GM12878 (cell line): ENCODE measurements at regions of chr7 and their contacts with region 1.

Region 1: DNA sequence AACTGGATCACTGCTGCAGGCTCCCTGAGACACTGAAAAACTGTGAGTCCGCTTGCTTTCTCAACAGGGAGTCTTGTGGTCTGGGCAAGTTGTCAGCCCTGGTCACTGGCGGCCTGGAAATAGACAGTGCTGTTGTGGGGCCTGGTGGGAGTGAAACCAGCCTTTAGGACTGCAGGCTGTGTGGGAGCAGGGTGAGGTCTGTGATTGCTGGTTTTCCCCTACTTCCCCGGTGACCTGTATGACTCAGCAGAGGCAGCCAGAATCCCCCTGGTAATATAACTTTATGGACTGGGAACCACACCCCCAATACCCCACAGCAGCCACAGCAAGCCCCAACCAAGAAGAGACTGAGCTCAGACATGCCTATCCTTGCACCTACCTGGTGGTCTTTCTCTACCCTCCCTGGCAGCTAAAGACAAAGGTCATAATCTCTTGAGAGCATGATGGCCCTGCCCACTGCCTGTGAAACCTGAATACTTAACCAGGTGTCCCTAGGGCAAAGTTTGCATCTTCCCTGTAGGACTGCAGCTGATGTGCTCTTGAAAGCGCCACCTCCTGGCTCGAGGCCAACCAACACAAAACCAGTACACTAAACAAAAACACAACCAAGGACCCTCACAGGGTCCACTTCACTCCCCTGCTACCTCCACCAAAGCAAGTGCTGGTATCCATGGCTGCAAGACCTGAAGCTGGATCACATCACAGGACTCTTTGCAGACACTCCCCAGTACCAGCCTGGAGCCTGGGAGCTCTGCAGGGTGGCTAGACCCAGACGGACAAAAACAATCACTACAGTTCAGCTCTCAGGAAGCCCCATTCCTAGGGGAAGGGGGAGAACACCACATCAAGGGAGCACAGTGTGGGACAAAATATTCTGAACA is 7.2 kb upstream of the ADAM22 start:
- DNase-seq: peak; percentile 95
- ATAC-seq: peak; percentile 90
- H3K4me3 ChIP-seq: peak overlapping the region; percentile 62
- H3K27ac ChIP-seq: peak overlapping the region; percentile 92
- H3K4me1 ChIP-seq: peaks cover 9% of the 10 kb centered on the region
- H3K27me3 ChIP-seq: no peaks in the 10 kb centered on the region
- CTCF ChIP-seq: peak; percentile 36 to 48 (median 40)
- EP300 ChIP-seq: peak in 1 of 2 experiments; percentile 91; a peak in 3 of 4 replicates
- POLR2A ChIP-seq: peak; percentile 69
- RAD21 ChIP-seq: peak; percentile 10; the same call in 1 of the 2 replicates

Region 2: DNA sequence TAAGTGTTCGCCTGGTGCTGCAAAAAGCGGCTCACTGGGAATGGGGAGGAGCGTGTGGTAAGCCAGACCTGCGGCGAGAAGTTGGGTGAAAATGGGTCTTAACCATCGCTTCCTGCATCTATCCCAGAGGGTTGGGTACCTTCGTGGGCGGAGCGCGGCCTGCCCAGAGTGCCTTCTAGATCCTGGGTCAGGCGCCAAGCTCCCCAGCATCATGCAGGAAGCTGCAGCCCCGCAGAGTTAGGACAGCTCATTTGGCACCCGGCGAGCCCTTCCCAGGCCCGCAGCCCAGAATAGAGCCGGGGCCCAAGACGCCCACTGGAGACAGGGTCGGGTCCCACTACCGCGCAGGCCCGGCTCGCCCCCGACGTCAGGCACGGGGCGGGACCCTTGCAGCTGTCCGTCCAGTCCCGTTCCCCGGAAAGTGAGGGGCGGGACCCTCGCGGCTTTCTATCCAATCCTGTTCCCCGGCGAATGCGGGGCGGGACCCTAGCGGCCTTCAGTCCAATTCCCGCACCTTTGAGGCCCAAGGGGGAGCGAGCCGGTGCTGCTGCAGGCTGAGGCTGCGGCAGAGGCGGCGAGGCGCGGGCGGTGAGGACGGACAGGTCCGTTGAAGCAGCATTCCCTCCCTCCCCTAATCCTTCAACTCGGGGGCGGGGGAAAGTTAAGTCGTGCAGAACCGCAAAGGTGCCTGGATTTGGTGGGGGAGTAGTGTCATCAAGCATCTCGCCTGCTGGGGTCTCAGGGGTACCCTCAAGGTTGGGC is 581.5 kb before region 1 on chr7 and contains the start of gene CROT:
- CTCF ChIA-PET with region 1: no interaction called
- POLR2A ChIA-PET with region 1: no interaction called
- RAD21 ChIA-PET with region 1: no interaction called
- SMC1A ChIA-PET with region 1: no interaction called
- in situ Hi-C with region 1: no loop called
- intact Hi-C with region 1: loop called (anchors 10 kb)
- DNase-seq: peak; percentile 67
- ATAC-seq: peak; percentile 97
- H3K4me3 ChIP-seq: peak within 1 kb of the TSS; percentile 80
- H3K27ac ChIP-seq: peak within 1 kb of the TSS; percentile 76
- H3K4me1 ChIP-seq: no peaks in the 10 kb centered on the region
- H3K27me3 ChIP-seq: no peaks in the 10 kb centered on the region
- CTCF ChIP-seq: no peak
- EP300 ChIP-seq: no peak
- POLR2A ChIP-seq: peak; percentile 91
- RAD21 ChIP-seq: no peak
- polyA plus RNA-seq, gene CROT: 5.5 to 6.0 TPM

Region 3: DNA sequence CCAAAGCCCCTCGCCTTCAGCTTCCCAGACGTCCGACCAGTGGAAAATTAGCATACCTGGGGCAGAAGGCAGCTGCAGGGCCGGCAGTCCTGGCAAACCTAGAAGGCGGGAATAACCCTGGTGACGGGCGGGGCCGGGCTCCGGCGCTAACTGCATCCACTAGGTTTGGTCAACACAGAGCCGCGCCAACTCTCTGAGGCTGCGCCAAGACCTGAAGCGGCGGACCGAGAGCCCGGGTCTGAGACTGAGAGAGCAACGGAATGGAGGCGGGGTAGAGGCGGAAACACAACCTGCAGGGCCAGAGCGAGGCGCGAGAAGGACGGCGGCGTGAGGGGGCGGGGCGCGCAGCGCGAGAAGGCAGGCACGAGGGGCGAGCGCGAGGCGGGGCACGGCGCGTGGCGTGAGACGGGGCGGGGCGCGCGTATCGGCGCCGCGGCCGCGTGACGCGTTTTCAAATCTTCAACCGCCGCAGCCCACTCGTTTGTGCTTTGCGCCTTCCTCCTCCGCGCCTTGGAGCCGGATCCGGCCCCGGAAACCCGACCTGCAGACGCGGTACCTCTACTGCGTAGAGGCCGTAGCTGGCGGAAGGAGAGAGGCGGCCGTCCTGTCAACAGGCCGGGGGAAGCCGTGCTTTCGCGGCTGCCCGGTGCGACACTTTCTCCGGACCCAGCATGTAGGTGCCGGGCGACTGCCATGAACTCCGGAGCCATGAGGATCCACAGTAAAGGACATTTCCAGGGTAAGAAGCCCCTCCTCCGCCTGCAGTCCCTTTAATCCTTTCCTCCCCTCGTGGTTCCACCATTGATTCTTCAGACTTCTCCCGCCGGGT is 50.6 kb before region 1 on chr7 and contains the starts of genes DBF4 and SLC25A40:
- CTCF ChIA-PET with region 1: interaction called, 13 read pairs
- POLR2A ChIA-PET with region 1: interaction called, 16 read pairs
- RAD21 ChIA-PET with region 1: interaction called, 16 read pairs
- SMC1A ChIA-PET with region 1: interaction called, 19 read pairs
- in situ Hi-C with region 1: no loop called
- intact Hi-C with region 1: loop called (anchors 1 kb)
- DNase-seq: peak; percentile 86
- ATAC-seq: peak; percentile 86
- H3K4me3 ChIP-seq: peak within 1 kb of the TSS; percentile 88
- H3K27ac ChIP-seq: peak within 1 kb of the TSS; percentile 92
- H3K4me1 ChIP-seq: no peaks in the 10 kb centered on the region
- H3K27me3 ChIP-seq: no peaks in the 10 kb centered on the region
- CTCF ChIP-seq: no peak
- EP300 ChIP-seq: peak in 1 of 2 experiments; percentile 34; a peak in 1 of 4 replicates
- POLR2A ChIP-seq: peak; percentile 91
- RAD21 ChIP-seq: no peak
- polyA plus RNA-seq, gene DBF4: 46.1 to 47.0 TPM
- polyA plus RNA-seq, gene SLC25A40: 15.8 to 17.4 TPM

Region 4: DNA sequence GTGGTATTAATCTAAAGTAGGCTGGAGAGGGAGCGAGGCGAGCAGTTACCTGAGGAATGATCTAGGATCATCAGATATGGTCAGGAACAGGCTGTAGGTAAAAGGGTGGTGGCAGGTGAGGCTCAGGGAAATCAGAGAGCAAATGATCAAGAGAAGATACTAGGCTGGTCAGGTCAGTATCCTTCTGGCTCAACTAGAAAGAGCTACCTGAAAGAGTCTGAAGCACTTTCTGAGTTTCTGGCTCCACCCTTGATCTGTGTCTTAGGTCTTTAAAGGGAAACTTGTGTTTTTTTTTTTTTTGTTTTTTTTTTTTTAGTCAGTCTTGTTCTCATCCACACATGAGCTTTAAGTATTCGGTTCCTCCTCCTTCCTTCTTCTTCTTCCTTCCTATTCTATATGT is 17.7 kb after region 1 on chr7:
- CTCF ChIA-PET with region 1: interaction called, 8 read pairs
- POLR2A ChIA-PET with region 1: interaction called, 3 read pairs
- RAD21 ChIA-PET with region 1: interaction called, 5 read pairs
- SMC1A ChIA-PET with region 1: interaction called, 18 read pairs
- in situ Hi-C with region 1: no loop called
- intact Hi-C with region 1: no loop called
- DNase-seq: no peak
- ATAC-seq: peak; percentile 77
- H3K4me3 ChIP-seq: no peak overlapping the region
- H3K27ac ChIP-seq: no peak overlapping the region; the same call in 1 of the 2 replicates
- H3K4me1 ChIP-seq: peaks cover 6% of the 10 kb centered on the region; the same call in 1 of the 2 replicates
- H3K27me3 ChIP-seq: no peaks in the 10 kb centered on the region
- CTCF ChIP-seq: no peak
- EP300 ChIP-seq: no peak
- POLR2A ChIP-seq: no peak
- RAD21 ChIP-seq: no peak

Region 5: GRCh38 chr7:88046839-88047573 is 120.2 kb after region 1 on chr7:
- CTCF ChIA-PET with region 1: interaction called, 4 read pairs
- POLR2A ChIA-PET with region 1: interaction called, 3 read pairs
- RAD21 ChIA-PET with region 1: interaction called, 11 read pairs
- SMC1A ChIA-PET with region 1: interaction called, 8 read pairs
- in situ Hi-C with region 1: no loop called
- intact Hi-C with region 1: loop called (anchors 5 kb)
- DNase-seq: no peak
- ATAC-seq: peak; percentile 46
- H3K4me3 ChIP-seq: no peak overlapping the region
- H3K27ac ChIP-seq: no peak overlapping the region; the same call in 1 of the 2 replicates
- H3K4me1 ChIP-seq: peaks cover 5% of the 10 kb centered on the region
- H3K27me3 ChIP-seq: no peaks in the 10 kb centered on the region
- CTCF ChIP-seq: no peak
- EP300 ChIP-seq: no peak
- POLR2A ChIP-seq: no peak
- RAD21 ChIP-seq: no peak

Region 6: GRCh38 chr7:88101769-88102168 is 174.9 kb after region 1 on chr7:
- CTCF ChIA-PET with region 1: interaction called, 8 read pairs
- POLR2A ChIA-PET with region 1: interaction called, 5 read pairs
- RAD21 ChIA-PET with region 1: interaction called, 3 read pairs
- SMC1A ChIA-PET with region 1: interaction called, 10 read pairs
- in situ Hi-C with region 1: no loop called
- intact Hi-C with region 1: no loop called
- DNase-seq: no peak
- ATAC-seq: peak; percentile 70
- H3K4me3 ChIP-seq: no peak overlapping the region
- H3K27ac ChIP-seq: no peak overlapping the region
- H3K4me1 ChIP-seq: peaks cover 7% of the 10 kb centered on the region; the same call in 1 of the 2 replicates
- H3K27me3 ChIP-seq: no peaks in the 10 kb centered on the region
- CTCF ChIP-seq: no peak
- EP300 ChIP-seq: no peak
- POLR2A ChIP-seq: no peak
- RAD21 ChIP-seq: no peak

Region 7: DNA sequence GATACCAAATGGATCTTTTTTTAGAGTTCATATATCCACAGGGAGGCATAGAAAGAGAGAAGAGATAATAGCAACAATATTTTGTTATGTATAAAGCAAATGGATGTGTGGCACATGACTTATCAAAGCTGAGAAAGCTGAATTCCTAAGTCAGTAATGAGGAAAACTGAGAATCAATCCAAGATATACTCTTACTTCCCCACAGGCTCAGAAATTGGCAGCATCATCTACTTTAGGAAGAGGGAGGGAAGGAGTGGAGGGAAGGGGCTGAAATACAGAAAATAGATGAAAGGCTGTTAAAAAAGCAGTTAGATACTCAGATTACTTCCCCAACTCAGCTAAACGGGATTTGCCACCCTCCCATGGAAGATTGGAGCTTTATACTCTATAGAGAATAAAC is 229.5 kb after region 1 on chr7:
- CTCF ChIA-PET with region 1: no interaction called
- POLR2A ChIA-PET with region 1: no interaction called
- RAD21 ChIA-PET with region 1: no interaction called
- SMC1A ChIA-PET with region 1: no interaction called
- in situ Hi-C with region 1: no loop called
- intact Hi-C with region 1: no loop called
- DNase-seq: no peak
- ATAC-seq: no peak
- H3K4me3 ChIP-seq: no peak overlapping the region
- H3K27ac ChIP-seq: no peak overlapping the region
- H3K4me1 ChIP-seq: no peaks in the 10 kb centered on the region
- H3K27me3 ChIP-seq: no peaks in the 10 kb centered on the region
- CTCF ChIP-seq: no peak
- EP300 ChIP-seq: no peak
- POLR2A ChIP-seq: no peak
- RAD21 ChIP-seq: no peak

Region 8: GRCh38 chr7:88725754-88726153 is 798.9 kb after region 1 on chr7:
- CTCF ChIA-PET with region 1: no interaction called
- POLR2A ChIA-PET with region 1: no interaction called
- RAD21 ChIA-PET with region 1: no interaction called
- SMC1A ChIA-PET with region 1: no interaction called
- in situ Hi-C with region 1: no loop called
- intact Hi-C with region 1: no loop called
- DNase-seq: no peak
- ATAC-seq: no peak
- H3K4me3 ChIP-seq: no peak overlapping the region
- H3K27ac ChIP-seq: no peak overlapping the region
- H3K4me1 ChIP-seq: no peaks in the 10 kb centered on the region
- H3K27me3 ChIP-seq: no peaks in the 10 kb centered on the region
- CTCF ChIP-seq: no peak
- EP300 ChIP-seq: no peak
- POLR2A ChIP-seq: no peak
- RAD21 ChIP-seq: no peak